ENCODE measurements at regions of chr1 and their contacts with region 1.

Region 1: GRCh38 chr1:8947127-8947691 is 1.5 kb downstream of the CA6 start:
- DNase-seq: no peak
- H3K4me3 ChIP-seq: no peak overlapping the region
- H3K4me3 Mint-ChIP-seq: peak overlapping the region in 7 of 8 donors; percentile 49 to 72 (median 64)
- H3K27ac ChIP-seq: peak overlapping the region; percentile 11
- H3K27ac Mint-ChIP-seq: peak overlapping the region; percentile 82 to 91 (median 86)
- H3K4me1 ChIP-seq: peaks cover 42% of the 10 kb centered on the region
- H3K4me1 Mint-ChIP-seq: peaks cover 16 to 56% (median 33%) of the 10 kb centered on the region in 4 donors
- H3K27me3 ChIP-seq: no peaks in the 10 kb centered on the region
- H3K27me3 Mint-ChIP-seq: no peaks in the 10 kb centered on the region

Region 2: DNA sequence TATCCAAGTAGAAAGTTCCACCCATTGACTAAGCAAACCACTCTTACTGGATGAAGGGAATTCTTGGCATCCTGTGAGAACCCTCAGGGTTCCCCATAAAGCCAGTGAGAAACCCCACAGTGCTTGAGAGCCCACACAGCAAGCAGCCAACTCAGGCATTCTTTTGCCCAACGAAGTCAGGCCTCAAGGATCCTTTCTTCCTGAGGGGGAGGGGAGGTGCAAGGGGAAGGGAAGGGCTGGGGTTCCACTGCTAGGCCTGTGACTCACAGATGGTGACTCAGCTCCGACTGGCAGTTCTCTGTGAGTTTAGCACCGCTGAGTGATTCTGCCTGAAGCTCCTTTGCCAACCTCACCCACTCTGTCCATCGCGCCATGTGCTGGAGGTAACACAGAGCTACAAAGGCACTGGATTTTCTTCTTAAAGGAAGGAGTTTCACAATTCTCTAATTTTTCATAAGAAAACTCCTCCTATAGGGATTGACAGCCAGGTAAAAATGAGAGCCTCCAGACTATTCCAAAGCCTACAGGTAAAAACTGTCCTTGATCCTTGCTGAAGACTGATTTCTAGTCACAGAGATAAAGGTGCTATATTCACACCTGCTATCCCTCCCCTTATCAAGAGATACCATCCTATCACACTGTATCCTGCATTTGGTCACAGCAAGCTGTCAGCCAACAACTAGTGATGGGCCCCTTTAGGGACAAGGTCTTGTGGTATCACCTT is 73.5 kb before region 1 on chr1:
- CTCF ChIA-PET with region 1: no interaction called
- POLR2A ChIA-PET with region 1: interaction called, 3 read pairs
- intact Hi-C with region 1: loop called (anchors 2 kb)
- DNase-seq: peak in 3 of 5 donors; percentile 13 to 89 (median 20)
- H3K4me3 ChIP-seq: no peak overlapping the region
- H3K4me3 Mint-ChIP-seq: peak overlapping the region in 6 of 8 donors; percentile 25 to 69 (median 42)
- H3K27ac ChIP-seq: peak overlapping the region; percentile 47
- H3K27ac Mint-ChIP-seq: peak overlapping the region; percentile 66 to 90 (median 77)
- H3K4me1 ChIP-seq: peaks cover 55% of the 10 kb centered on the region
- H3K4me1 Mint-ChIP-seq: peaks cover 38 to 81% (median 56%) of the 10 kb centered on the region in 4 donors
- H3K27me3 ChIP-seq: no peaks in the 10 kb centered on the region
- H3K27me3 Mint-ChIP-seq: no peaks in the 10 kb centered on the region

Region 3: GRCh38 chr1:8962812-8963530 is 15.8 kb after region 1 on chr1:
- CTCF ChIA-PET with region 1: interaction called, 26 read pairs
- POLR2A ChIA-PET with region 1: interaction called, 12 read pairs
- intact Hi-C with region 1: no loop called
- DNase-seq: no peak
- H3K4me3 ChIP-seq: no peak overlapping the region
- H3K4me3 Mint-ChIP-seq: peak overlapping the region in 5 of 8 donors; percentile 3 to 64 (median 51)
- H3K27ac ChIP-seq: no peak overlapping the region
- H3K27ac Mint-ChIP-seq: peak overlapping the region in 5 of 7 donors; percentile 34 to 74 (median 57)
- H3K4me1 ChIP-seq: peaks cover 29% of the 10 kb centered on the region
- H3K4me1 Mint-ChIP-seq: peaks cover 26 to 63% (median 38%) of the 10 kb centered on the region in 4 donors
- H3K27me3 ChIP-seq: no peaks in the 10 kb centered on the region
- H3K27me3 Mint-ChIP-seq: peaks cover 0 to 3% of the 10 kb centered on the region in 2 donors

Region 4: GRCh38 chr1:9181176-9181906 is 234.1 kb after region 1 on chr1:
- CTCF ChIA-PET with region 1: no interaction called
- POLR2A ChIA-PET with region 1: no interaction called
- intact Hi-C with region 1: no loop called
- DNase-seq: peak; percentile 50 to 65 (median 57)
- H3K4me3 ChIP-seq: peak overlapping the region in 1 of 2 donors; percentile 47
- H3K4me3 Mint-ChIP-seq: peak overlapping the region; percentile 66 to 86 (median 80)
- H3K27ac ChIP-seq: no peak overlapping the region
- H3K27ac Mint-ChIP-seq: no peak overlapping the region
- H3K4me1 ChIP-seq: peaks cover 13% of the 10 kb centered on the region
- H3K4me1 Mint-ChIP-seq: peaks cover 3 to 9% (median 8%) of the 10 kb centered on the region in 4 donors
- H3K27me3 ChIP-seq: peaks cover 17% of the 10 kb centered on the region
- H3K27me3 Mint-ChIP-seq: peaks cover 13 to 15% of the 10 kb centered on the region in 2 donors